SK-N-SH (cell line): ENCODE measurements at regions of chr10 and their contacts with region 1.

Region 1: GRCh38 chr10:51389415-51390321 is 309.7 kb downstream of the CSTF2T start:
- DNase-seq: peak; percentile 69
- H3K4me3 ChIP-seq: peak overlapping the region in 1 of 2 experiments; percentile 31; a peak in 1 of 4 replicates
- H3K27ac ChIP-seq: peak overlapping the region; percentile 54 to 82; a peak in 3 of 4 replicates
- H3K4me1 ChIP-seq: no peaks in the 10 kb centered on the region; a peak in 1 of 4 replicates
- H3K27me3 ChIP-seq: no peaks in the 10 kb centered on the region
- CTCF ChIP-seq: peak; percentile 81
- EP300 ChIP-seq: peak; percentile 29 to 93; a peak in 3 of 4 replicates
- RAD21 ChIP-seq: peak; percentile 87

Region 2: DNA sequence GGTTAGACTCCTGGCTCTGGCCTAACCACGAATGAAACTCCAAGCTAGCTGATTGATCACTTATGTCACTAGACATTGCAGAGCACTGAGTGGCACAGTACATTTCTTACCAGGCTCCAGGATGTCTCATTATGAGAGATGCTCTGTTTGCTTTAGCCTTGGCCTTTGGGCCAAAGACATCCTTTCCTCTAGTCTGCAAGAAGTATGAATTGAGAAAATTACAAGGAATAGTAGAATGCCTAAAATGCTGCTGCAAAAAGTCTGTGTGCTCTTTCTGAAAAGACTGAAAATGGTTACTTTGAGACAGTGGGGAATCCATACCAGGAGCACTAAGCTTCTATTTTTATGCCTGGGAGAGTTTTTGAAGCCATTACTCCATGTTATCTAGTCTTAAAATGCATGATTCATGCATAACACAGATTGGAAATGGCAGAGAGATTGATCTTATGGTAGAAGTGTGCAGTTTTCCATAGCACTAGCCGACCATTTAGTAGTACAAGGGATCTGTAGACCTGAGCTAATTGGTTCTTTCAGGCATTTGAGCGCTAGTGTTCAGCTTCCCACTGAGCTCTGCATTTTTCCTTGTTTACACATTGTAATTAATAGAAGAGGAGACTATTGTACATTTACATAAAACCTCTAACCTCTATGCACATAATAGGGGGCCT is 11.6 kb before region 1 on chr10:
- CTCF ChIA-PET with region 1: interaction called, 20 read pairs
- POLR2A ChIA-PET with region 1: no interaction called
- DNase-seq: no peak
- H3K4me3 ChIP-seq: no peak overlapping the region
- H3K27ac ChIP-seq: peak overlapping the region in 1 of 2 experiments; percentile 13; a peak in 1 of 4 replicates
- H3K4me1 ChIP-seq: no peaks in the 10 kb centered on the region; a peak in 1 of 4 replicates
- H3K27me3 ChIP-seq: no peaks in the 10 kb centered on the region
- CTCF ChIP-seq: no peak
- EP300 ChIP-seq: no peak
- RAD21 ChIP-seq: no peak

Region 3: DNA sequence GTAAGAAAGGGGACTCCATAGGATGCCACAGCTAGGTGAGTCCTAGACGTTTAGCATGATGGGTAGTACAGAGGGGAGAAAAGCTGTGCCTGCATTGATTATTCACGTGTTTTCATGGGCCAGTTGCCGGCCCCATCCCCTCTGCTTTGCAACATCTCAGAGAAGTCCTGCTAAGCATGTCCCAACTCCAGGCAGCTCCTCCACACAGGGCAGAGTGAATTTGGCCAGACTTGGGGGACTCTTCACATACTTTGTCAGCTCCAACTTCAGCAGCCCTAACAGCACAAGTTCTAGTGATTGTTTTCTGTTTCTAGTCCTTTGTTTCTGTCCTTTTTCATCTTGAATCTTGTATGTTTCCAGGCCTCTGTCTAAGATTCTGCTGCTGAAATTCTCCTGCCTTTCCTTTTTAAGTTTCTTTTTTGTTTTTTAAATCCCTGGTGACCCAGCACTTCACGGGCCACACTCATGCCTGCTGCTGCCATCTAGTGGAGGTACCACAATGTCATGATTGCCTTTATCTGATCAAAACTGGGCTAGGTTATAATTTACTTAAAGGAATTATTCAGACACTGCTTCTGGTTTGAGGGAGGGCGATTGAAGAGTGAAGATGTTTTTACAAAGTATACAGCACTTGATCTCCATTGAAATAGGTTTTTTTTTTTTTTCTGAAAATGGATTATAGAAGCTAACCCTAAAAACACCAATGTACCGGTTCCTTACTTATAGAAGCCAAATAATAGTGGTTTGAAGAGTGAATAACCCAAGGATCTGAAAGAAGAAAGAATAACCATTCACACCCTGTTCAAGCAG is 32.8 kb after region 1 on chr10:
- CTCF ChIA-PET with region 1: interaction called, 13 read pairs
- POLR2A ChIA-PET with region 1: no interaction called
- DNase-seq: peak; percentile 21
- H3K4me3 ChIP-seq: peak overlapping the region in 1 of 2 experiments; percentile 2; a peak in 1 of 4 replicates
- H3K27ac ChIP-seq: peak overlapping the region in 1 of 2 experiments; percentile 55; a peak in 1 of 4 replicates
- H3K4me1 ChIP-seq: peaks cover 0 to 3% of the 10 kb centered on the region in 2 experiments; a peak in 2 of 4 replicates
- H3K27me3 ChIP-seq: no peaks in the 10 kb centered on the region
- CTCF ChIP-seq: peak; percentile 95
- EP300 ChIP-seq: no peak
- RAD21 ChIP-seq: peak; percentile 74

Region 4: DNA sequence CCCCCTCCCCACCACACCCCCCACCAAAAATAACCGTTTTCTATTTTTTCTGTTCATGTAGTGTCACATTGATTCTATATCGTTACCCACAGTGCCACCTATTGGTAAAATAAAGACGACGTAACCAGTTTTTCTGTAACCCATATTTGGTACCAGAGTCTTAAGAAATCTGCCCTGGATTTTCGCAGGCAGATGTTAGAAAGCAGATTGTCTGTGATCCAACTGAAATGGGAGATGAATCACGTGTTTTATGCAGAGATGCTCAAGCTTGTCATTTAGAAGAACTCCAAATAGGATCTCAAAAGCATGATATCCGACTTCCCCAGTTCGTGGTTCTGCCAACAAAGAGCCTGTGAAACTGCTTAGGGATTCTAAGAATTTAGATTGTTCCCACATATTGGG is 570.8 kb after region 1 on chr10:
- CTCF ChIA-PET with region 1: interaction called, 46 read pairs
- POLR2A ChIA-PET with region 1: no interaction called
- DNase-seq: peak; percentile 34
- H3K4me3 ChIP-seq: peak overlapping the region in 1 of 2 experiments; percentile 27; a peak in 1 of 4 replicates
- H3K27ac ChIP-seq: peak overlapping the region in 1 of 2 experiments; percentile 22; a peak in 2 of 4 replicates
- H3K4me1 ChIP-seq: no peaks in the 10 kb centered on the region; a peak in 1 of 4 replicates
- H3K27me3 ChIP-seq: no peaks in the 10 kb centered on the region
- CTCF ChIP-seq: peak; percentile 71
- EP300 ChIP-seq: peak in 1 of 2 experiments; percentile 9; a peak in 1 of 4 replicates
- RAD21 ChIP-seq: peak; percentile 86

Region 5: GRCh38 chr10:52004342-52004949 is 614.8 kb after region 1 on chr10:
- CTCF ChIA-PET with region 1: interaction called, 13 read pairs
- POLR2A ChIA-PET with region 1: no interaction called
- DNase-seq: peak; percentile 60
- H3K4me3 ChIP-seq: no peak overlapping the region
- H3K27ac ChIP-seq: no peak overlapping the region
- H3K4me1 ChIP-seq: no peaks in the 10 kb centered on the region; a peak in 1 of 4 replicates
- H3K27me3 ChIP-seq: no peaks in the 10 kb centered on the region
- CTCF ChIP-seq: peak; percentile 81
- EP300 ChIP-seq: no peak
- RAD21 ChIP-seq: peak; percentile 84

Region 6: DNA sequence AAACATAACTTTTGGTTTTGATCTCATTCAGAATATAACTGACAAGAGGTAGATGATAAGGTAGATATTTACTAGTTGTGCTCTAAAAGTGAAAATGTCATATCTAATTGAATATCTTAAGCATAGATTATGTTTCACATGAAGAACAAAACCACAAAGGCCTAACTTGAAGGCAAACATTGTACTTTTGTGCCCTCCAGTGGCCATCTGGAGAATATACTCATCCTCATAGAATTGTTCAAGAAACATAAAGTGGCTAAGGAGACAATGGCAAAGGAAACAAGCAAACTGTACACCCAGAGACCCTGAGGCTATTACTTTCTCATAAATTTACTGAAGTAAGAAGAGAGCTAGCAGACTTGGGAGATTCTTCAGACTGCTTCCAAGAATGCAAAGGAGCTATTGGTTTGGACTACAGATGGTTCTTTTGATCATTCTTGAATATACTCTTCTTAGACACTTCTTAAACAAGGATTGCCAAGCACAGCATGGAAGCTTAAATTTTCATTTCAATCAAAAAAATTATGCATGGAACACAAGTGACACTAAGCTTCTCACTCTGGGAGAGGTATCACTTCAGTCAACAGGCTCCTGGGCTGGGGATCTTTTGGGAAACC is 826.2 kb after region 1 on chr10:
- CTCF ChIA-PET with region 1: interaction called, 20 read pairs
- POLR2A ChIA-PET with region 1: no interaction called
- DNase-seq: peak; percentile 32
- H3K4me3 ChIP-seq: peak overlapping the region in 1 of 2 experiments; percentile 10; a peak in 1 of 4 replicates
- H3K27ac ChIP-seq: peak overlapping the region in 1 of 2 experiments; percentile 69; a peak in 3 of 4 replicates
- H3K4me1 ChIP-seq: peaks cover 6 to 8% of the 10 kb centered on the region in 2 experiments
- H3K27me3 ChIP-seq: no peaks in the 10 kb centered on the region
- CTCF ChIP-seq: peak; percentile 83
- EP300 ChIP-seq: no peak
- RAD21 ChIP-seq: peak; percentile 93